Tibial artery (tissue), 4 donors: ENCODE measurements at regions of chr1 and their contacts with region 1.

Region 1: GRCh38 chr1:23959041-23959460 is 577 bp upstream of the PNRC2 start:
- DNase-seq: peak; percentile 92 to 93
- H3K4me3 ChIP-seq: peak overlapping the region; percentile 71 to 81
- H3K27ac ChIP-seq: peak overlapping the region; percentile 95 to 99
- H3K4me1 ChIP-seq: peaks cover 0 to 27% (median 4%) of the 10 kb centered on the region in 4 donors
- H3K27me3 ChIP-seq: no peaks in the 10 kb centered on the region
- CTCF ChIP-seq: peak; percentile 32 to 46

Region 2: GRCh38 chr1:23743287-23744052 is 215.6 kb before region 1 on chr1 and contains the start of gene ELOA:
- intact Hi-C with region 1: no loop called
- DNase-seq: peak; percentile 60 to 85
- H3K4me3 ChIP-seq: peak within 1 kb of the TSS; percentile 94 to 98
- H3K27ac ChIP-seq: peak within 1 kb of the TSS; percentile 95
- H3K4me1 ChIP-seq: peaks cover 0 to 41% (median 21%) of the 10 kb centered on the region in 4 donors
- H3K27me3 ChIP-seq: no peaks in the 10 kb centered on the region
- CTCF ChIP-seq: no peak

Region 3: GRCh38 chr1:23889074-23889473 is 70.0 kb before region 1 on chr1:
- intact Hi-C with region 1: no loop called
- DNase-seq: no peak
- H3K4me3 ChIP-seq: no peak overlapping the region
- H3K27ac ChIP-seq: no peak overlapping the region
- H3K4me1 ChIP-seq: no peaks in the 10 kb centered on the region
- H3K27me3 ChIP-seq: no peaks in the 10 kb centered on the region
- CTCF ChIP-seq: no peak

Region 4: DNA sequence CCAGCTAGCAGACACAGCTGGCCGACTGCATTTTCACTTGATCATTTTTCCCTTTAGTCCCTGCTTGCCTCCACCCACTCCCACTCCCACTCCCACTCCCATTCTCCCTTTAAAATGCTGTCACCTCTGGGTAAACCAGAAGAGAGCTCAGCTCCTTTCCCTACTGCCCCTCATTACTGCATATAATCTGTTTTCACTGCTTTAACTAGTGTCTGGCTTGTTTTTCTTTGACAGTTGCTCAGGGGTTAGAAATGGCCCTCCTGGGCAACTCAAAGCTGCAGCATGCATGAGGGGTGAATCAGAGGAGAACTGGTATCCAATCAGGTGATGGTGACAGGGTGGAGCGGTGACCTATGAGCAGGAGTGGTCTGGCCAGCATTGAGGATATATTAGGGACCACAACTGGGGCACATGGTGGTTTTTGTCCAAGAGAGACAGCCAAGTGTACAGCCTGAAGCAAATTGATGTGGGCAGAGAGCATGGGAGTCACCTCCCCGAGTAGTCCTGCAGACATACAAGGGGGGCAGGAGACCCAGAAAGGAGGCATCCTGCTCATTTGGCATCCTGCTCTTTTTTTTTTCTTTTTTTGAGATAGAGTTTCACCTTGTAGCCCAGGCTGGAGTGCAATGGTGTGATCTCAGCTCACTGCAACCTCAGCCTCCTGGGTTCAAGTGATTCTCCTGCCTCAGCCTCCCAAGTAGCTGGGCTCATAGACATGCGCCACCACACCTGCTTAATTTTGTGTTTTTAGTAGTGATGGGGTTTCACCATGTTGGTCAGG is 63.7 kb after region 1 on chr1:
- intact Hi-C with region 1: loop called (anchors 5 kb)
- DNase-seq: no peak
- H3K4me3 ChIP-seq: no peak overlapping the region
- H3K27ac ChIP-seq: peak overlapping the region; percentile 86
- H3K4me1 ChIP-seq: peaks cover 0 to 60% (median 52%) of the 10 kb centered on the region in 4 donors
- H3K27me3 ChIP-seq: no peaks in the 10 kb centered on the region
- CTCF ChIP-seq: no peak

Region 5: GRCh38 chr1:24032981-24033380 is 73.9 kb after region 1 on chr1:
- intact Hi-C with region 1: no loop called
- DNase-seq: no peak
- H3K4me3 ChIP-seq: no peak overlapping the region
- H3K27ac ChIP-seq: no peak overlapping the region
- H3K4me1 ChIP-seq: peaks cover 0 to 7% (median under 1%) of the 10 kb centered on the region in 4 donors
- H3K27me3 ChIP-seq: no peaks in the 10 kb centered on the region
- CTCF ChIP-seq: no peak